ENCODE measurements at regions of chr16 and their contacts with region 1.

Region 1: DNA sequence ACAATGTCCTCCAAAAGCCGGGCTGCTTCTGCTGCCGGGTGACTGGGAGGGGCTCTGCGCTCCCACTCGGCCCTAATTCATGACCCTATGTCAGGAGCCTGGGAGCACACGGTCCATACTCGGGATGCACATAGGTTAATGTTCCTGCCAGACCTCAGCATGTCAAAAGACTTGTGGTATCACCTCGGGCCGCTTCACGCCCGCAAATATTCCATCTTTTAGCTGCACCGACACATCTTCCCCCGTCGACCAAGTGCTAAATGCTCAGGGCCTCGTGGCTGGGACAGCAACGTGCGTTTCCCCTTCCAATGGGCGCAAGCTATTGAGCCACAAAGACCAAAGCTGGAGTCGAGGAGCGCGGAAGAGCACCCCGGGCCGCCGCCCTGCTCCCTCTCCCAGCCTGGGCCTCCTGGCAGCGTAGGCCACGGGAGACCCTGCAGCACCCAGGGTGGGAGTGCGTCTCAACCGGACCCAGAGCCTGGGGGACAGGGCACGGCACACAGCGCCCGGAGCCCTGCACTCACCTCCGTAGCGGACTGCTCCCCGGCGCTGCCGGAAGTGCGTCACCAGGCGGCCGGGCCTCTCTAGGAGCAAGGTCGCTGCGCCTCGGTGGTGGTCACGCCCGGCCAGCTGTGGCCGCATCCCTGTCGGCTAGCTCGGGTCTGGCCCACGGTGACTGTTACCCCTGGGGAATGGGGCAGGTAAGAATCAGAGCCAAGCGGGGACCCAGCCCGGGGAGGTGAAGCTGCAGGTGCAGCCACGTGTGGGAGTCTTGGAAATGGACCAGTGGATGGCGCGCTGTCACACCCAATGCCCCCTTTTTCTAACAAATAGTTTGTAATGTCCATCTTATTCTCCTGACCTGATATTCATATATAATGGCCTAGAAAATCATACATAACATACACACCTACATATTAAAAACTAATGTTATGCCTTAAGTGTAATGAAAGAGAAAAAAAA is at the start of gene ZNF23:
- DNase-seq: peak; percentile 66
- ATAC-seq: peak; percentile 93
- H3K4me3 ChIP-seq: peak within 1 kb of the TSS; percentile 86
- H3K27ac ChIP-seq: peak within 1 kb of the TSS; percentile 15; the same call in 1 of the 2 replicates
- H3K4me1 ChIP-seq: peaks cover 13% of the 10 kb centered on the region
- H3K27me3 ChIP-seq: no peaks in the 10 kb centered on the region
- CTCF ChIP-seq: no peak
- total RNA-seq, gene ZNF23: 6.6 and 7.5 TPM in 2 replicates

Region 2: DNA sequence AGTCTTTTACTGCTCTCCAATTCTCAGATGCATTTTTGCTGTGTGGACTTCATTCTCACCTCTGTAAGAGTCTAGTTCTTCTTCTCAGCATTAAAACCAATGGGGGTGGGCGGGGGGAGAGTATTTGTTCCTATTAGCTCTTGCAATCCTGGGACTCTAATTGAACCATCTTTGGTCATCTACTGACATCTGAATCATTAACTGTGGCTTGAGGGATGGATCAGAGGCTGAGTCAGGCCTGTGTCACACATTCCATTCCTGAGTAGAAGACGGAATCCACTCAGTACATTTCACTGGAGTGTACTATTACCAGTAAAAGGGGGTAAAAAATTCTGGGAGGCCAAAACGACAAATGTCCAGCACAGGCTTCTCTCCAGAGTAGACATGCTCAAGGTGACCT is 12.9 kb after region 1 on chr16:
- CTCF ChIA-PET with region 1: no interaction called
- POLR2A ChIA-PET with region 1: no interaction called
- intact Hi-C with region 1: loop called (anchors 2 kb)
- DNase-seq: peak; percentile 90
- ATAC-seq: peak; percentile 97
- H3K4me3 ChIP-seq: no peak overlapping the region
- H3K27ac ChIP-seq: peak overlapping the region; percentile 65
- H3K4me1 ChIP-seq: peaks cover 20% of the 10 kb centered on the region
- H3K27me3 ChIP-seq: no peaks in the 10 kb centered on the region
- CTCF ChIP-seq: no peak

Region 3: DNA sequence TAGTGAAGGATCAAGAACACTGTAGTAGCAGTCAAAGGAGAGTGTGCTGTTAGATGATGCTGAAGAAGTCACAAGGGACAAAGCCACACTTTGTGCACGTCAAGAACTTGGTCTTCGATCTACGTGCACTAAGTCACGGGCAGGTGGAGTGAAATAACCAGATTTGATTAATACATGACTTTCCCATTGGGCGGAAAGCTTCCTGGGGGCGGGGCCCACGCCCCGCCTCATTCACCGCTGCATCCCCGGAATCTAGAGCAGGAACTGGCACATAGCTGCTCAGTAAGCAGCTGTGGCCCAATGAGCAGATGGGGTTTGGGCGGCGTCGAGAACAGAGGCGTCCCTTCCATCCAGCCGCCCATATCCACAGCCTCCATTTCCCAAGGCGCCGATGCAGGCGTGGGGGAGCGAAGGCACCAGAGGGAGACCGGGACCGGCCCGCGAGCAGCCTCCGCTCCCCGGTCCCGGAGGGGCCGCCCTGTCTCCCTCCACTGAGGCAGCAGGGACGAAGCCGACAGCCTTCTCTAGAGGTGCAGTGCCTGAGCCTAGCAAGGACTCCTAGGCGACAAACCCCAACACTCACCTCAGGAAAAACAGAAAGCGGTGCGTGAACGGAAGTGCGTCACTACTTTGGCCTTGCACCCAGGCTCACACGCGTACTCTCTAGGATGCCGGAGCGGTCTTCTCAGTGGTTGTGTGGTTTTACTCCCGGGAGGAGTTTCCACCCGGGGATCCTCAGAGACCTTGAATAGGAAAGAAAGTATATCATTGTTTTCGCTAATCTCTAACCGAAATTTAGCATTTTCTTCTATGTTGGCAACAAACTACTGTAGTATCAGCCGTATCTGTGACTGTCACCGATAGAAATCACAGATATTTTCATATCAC is 22.3 kb after region 1 on chr16:
- CTCF ChIA-PET with region 1: no interaction called
- POLR2A ChIA-PET with region 1: no interaction called
- intact Hi-C with region 1: loop called (anchors 1 kb)
- DNase-seq: peak; percentile 79
- ATAC-seq: peak; percentile 93
- H3K4me3 ChIP-seq: peak overlapping the region; percentile 82
- H3K27ac ChIP-seq: peak overlapping the region; percentile 85
- H3K4me1 ChIP-seq: peaks cover 6% of the 10 kb centered on the region; the same call in 1 of the 2 replicates
- H3K27me3 ChIP-seq: no peaks in the 10 kb centered on the region
- CTCF ChIP-seq: no peak

Measured in PC-3 (cell line).